Activated CD8-positive, alpha-beta T cell treated with anti-CD3 and anti-CD28 coated beads for 36 hours (primary cell): ENCODE measurements at regions of chr9 and their contacts with region 1.

Region 1: DNA sequence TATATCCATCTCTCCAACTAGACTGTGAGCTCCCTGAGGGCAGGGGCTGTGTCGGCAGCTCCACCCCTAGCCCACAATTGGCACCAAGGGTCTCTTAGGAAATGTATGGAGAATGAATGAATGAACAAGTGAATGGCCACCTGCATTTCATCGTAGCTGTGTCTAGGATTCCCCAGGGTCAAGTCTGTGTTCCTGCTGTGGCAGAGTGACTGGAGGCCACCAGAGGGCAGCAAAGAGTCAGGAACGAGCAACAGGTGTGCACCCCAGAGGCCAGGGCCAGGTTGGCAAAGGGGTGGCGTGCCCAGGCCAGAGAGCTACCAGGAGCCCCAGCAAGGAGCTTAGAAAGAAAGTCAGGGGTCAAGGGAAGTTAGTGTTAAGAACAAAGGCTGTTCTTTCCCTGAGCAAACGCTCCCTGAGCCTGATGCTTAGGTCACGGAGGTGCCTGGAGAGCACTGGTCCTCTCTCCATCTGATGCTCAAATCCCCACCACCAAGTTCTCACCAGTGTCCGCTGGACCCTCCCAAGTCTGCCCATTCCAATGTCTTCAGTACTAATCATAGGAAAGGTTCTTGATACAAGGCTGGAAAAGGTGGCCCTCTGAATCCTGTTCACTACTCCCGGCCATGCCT is 160.7 kb downstream of the PAX5 start:
- DNase-seq: peak; percentile 83
- ATAC-seq: peak; percentile 92
- H3K4me3 Mint-ChIP-seq: no peak overlapping the region
- H3K27ac Mint-ChIP-seq: no peak overlapping the region
- H3K4me1 Mint-ChIP-seq: no peaks in the 10 kb centered on the region
- H3K27me3 Mint-ChIP-seq: peaks cover 2% of the 10 kb centered on the region
- CTCF ChIP-seq: peak; percentile 93

Region 2: DNA sequence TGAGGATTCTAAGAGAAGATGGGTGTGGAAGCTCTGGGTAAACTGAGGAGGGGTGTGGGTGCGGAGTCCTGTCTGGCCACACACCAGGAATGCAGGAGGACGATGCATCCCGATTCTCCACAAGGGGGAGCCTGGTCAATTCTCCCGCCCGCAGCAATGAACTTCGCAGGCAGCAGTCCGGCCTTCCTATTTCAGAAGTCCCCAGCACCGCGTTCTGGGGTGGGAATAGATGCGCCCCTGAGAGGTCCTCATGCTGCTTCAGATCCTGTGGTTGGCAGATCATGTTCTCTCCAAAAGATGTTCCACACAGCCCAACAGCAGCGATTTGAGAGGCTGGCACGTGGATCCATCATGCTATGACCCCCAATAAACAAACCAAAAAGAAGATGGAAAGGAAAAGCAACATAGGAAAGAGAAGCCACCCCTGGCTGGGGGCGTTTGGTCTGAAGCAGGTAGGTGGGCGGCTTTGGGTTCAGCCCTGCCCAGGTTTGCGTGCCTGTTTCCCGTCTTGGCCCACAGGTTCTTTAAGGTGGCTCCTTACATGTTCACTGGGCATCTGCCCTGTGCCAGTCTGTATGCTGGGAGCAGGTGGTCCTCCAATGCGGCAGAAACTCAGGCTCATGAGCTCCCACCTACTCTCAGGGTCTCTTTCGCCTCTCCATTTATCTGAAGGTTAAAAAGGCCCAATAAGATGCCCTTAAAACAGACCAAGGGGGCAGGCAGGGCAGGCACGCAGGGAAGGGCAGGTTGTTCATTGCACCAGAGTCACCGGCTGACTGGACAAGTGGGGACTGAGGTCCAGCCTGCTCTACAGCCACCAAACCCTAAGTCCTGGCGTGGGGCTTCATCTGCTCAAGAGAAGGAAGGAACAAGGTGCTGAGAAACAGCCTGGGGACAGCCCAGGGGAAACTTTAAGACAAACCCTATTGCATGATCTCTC is 10.9 kb before region 1 on chr9:
- CTCF ChIA-PET with region 1: interaction called, 22 read pairs
- POLR2A ChIA-PET with region 1: interaction called, 5 read pairs
- intact Hi-C with region 1: no loop called
- DNase-seq: peak; percentile 15
- ATAC-seq: no peak
- H3K4me3 Mint-ChIP-seq: no peak overlapping the region
- H3K27ac Mint-ChIP-seq: no peak overlapping the region
- H3K4me1 Mint-ChIP-seq: no peaks in the 10 kb centered on the region
- H3K27me3 Mint-ChIP-seq: peaks cover 3% of the 10 kb centered on the region
- CTCF ChIP-seq: no peak

Region 3: DNA sequence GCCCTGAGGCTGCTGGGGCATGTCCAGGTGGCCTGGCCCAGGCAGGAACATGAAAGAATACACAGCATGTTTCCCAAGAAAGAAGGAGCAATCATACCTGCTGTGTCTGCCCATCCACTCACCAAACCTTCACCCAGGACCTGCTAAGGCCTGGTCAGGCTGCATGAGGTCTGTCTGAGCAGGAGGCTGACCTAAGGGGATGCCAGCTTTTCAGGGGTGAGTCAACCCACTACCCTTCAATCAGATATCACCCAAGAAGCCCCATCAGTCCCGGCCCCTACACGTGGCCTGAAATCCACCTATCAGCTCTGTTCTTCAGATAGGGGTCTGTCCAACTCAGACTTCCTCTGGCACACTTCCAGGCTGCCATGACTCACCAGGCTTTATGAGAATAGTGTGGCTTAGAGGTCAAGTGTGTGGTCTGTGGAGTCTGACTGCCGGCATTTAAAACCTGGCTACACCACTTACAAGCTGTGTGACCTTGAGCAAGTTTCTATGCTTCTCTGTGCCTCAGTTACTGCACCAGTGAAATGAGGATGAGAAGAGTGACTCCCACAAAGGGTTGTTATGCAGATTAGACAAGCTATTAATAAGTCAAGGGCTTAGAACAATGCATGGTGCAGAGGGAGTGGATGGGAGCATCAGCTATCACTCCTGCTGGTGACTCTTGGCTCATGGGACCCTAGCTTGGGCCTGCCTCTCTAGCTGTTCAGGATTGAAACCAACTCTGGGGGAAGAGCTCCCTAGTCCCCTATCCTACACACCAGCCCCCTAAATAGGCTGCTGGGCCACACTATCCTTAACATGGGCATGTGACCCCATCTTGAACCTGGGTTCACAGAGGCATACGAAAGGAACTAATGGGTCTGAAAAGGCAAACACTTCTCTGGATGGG is 30.4 kb after region 1 on chr9:
- CTCF ChIA-PET with region 1: interaction called, 11 read pairs
- POLR2A ChIA-PET with region 1: no interaction called
- intact Hi-C with region 1: no loop called
- DNase-seq: peak; percentile 89
- ATAC-seq: peak; percentile 90
- H3K4me3 Mint-ChIP-seq: no peak overlapping the region
- H3K27ac Mint-ChIP-seq: no peak overlapping the region
- H3K4me1 Mint-ChIP-seq: peaks cover 6% of the 10 kb centered on the region
- H3K27me3 Mint-ChIP-seq: peaks cover 22% of the 10 kb centered on the region
- CTCF ChIP-seq: no peak

Region 4: GRCh38 chr9:36974731-36975130 is 101.4 kb after region 1 on chr9:
- CTCF ChIA-PET with region 1: interaction called, 13 read pairs
- POLR2A ChIA-PET with region 1: no interaction called
- intact Hi-C with region 1: no loop called
- DNase-seq: no peak
- ATAC-seq: no peak
- H3K4me3 Mint-ChIP-seq: no peak overlapping the region
- H3K27ac Mint-ChIP-seq: no peak overlapping the region
- H3K4me1 Mint-ChIP-seq: no peaks in the 10 kb centered on the region
- H3K27me3 Mint-ChIP-seq: peaks cover 5% of the 10 kb centered on the region
- CTCF ChIP-seq: no peak

Region 5: DNA sequence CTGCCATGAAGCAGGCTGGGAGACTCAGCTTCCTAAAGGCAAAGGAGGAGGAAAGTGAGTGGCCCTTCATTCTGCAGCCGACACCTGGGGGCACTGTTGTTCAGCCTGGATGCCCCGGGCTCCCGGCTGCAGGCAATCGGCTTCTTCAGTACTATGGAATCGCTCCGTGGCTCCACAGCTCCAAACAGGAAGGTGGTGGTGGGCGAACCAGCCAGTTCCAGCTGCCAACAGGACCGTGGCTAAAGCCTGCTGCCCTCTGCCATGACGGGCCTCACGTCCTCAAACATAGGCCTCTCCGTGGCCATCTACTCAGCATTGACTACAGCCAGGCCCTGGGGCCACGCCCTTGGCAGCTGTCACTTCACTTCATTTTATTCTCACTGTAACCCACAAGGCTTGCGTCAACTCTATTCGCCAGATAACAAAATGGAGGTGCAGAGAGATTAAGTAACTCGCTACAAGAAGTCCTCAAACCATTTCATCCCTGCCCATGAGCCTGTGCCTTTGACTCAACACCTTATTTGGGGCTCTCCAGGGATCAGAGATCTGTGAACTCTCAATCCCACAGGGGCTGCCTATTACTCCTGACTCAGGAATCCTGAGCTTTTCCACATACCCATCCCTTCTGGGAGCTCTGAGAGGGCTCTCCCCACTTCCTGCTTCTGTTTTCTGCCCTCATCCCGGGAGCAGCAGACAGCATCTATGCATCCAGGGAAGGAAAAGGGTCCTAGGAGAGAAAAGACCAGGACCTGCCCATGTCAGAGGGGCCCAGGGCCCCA is 122.8 kb after region 1 on chr9:
- CTCF ChIA-PET with region 1: interaction called, 105 read pairs
- POLR2A ChIA-PET with region 1: no interaction called
- intact Hi-C with region 1: loop called (anchors 2 kb)
- DNase-seq: peak; percentile 71
- ATAC-seq: peak; percentile 80
- H3K4me3 Mint-ChIP-seq: no peak overlapping the region
- H3K27ac Mint-ChIP-seq: no peak overlapping the region
- H3K4me1 Mint-ChIP-seq: no peaks in the 10 kb centered on the region
- H3K27me3 Mint-ChIP-seq: peaks cover 22% of the 10 kb centered on the region
- CTCF ChIP-seq: peak; percentile 65